ENCODE measurements at regions of chr22 and their contacts with region 1.

Region 1: DNA sequence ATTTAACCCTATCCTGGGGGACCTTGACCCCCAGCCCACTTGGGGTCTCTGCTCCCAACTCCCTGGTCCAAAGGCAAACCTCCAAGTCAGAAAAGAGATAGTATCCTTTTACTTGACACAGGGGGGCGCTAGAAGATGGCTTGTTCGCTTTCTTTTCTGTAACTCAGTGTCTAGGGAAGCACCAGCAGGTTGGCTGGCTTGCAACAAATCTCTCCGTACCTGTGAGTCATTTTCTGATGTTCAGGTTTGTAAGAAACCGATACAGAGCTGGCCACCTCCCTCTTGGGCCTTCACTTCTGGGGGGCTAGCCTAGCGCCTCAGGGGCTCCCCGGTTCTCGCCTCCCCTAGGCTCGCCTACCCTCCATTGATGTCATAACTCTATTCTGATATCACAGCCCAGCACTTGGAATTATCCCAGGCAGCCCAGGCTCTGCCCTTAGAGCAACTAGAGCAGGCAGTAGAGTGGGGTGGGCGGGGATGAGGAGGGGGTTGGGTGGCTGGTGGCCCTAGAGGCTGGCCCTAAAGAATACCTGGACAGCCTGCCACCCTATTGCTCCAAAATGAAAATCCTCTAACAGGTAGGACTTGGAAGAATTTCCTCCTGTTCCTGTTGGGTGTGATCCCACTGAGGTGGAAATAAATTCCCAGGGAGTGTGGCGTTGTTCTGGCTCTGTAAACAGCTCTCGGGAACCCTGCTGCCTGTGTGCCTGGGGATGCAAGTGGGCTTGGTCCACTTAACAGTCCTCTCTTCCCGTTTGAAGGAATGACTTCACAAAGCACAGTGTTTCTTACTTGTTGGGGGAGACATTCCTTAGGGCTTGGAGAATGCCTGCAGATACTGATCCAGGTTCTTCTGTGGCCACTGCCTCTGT is 69.4 kb downstream of the OSBP2 start:
- DNase-seq: no peak
- H3K4me3 ChIP-seq: no peak overlapping the region
- H3K27ac ChIP-seq: no peak overlapping the region
- H3K4me1 ChIP-seq: no peaks in the 10 kb centered on the region
- H3K27me3 ChIP-seq: no peaks in the 10 kb centered on the region
- CTCF ChIP-seq: peak; percentile 53 to 61

Region 2: DNA sequence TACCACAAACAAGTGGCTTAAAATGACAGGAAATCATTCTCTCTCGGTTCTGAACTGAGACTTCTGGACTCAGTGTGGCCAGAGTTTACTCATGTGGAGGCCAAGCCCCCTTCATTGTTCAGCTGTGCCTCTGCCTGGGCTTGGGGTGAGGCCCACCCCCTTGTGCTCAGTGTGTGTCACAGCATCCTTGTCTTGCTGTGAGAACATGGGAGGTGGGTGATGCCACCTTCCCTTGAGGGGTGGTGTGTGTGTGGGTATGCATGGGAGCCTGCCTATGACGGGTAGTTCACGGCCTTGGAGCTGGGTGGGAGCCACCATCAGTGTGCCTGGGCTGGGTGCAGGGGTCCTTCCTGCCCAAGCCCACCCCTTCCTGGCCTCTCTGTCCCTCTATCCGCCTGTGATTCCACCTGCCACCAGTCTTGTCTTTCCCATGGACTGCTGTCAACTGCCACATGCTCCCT is 102.8 kb after region 1 on chr22:
- intact Hi-C with region 1: no loop called
- DNase-seq: peak in 1 of 2 donors; percentile 32
- H3K4me3 ChIP-seq: no peak overlapping the region
- H3K27ac ChIP-seq: no peak overlapping the region
- H3K4me1 ChIP-seq: no peaks in the 10 kb centered on the region
- H3K27me3 ChIP-seq: peaks cover 0 to 15% of the 10 kb centered on the region in 2 donors
- CTCF ChIP-seq: no peak

Region 3: GRCh38 chr22:30920407-30920806 is 156.4 kb after region 1 on chr22:
- intact Hi-C with region 1: loop called (anchors 5 kb)
- DNase-seq: peak; percentile 79
- H3K4me3 ChIP-seq: no peak overlapping the region
- H3K27ac ChIP-seq: no peak overlapping the region
- H3K4me1 ChIP-seq: peaks cover 0 to 12% (median 0%) of the 10 kb centered on the region in 4 donors
- H3K27me3 ChIP-seq: no peaks in the 10 kb centered on the region
- CTCF ChIP-seq: peak; percentile 86 to 87

Measured in tibial artery (tissue), 4 donors.